ENCODE measurements at regions of chr22 and their contacts with region 1.

Region 1: GRCh38 chr22:19970479-19971275 is 29.1 kb upstream of the TXNRD2 start:
- DNase-seq: peak; percentile 83
- H3K4me3 Mint-ChIP-seq: no peak overlapping the region
- H3K27ac Mint-ChIP-seq: no peak overlapping the region
- H3K4me1 Mint-ChIP-seq: peaks cover 6% of the 10 kb centered on the region
- H3K27me3 Mint-ChIP-seq: no peaks in the 10 kb centered on the region

Region 2: GRCh38 chr22:19874307-19875060 is 96.2 kb before region 1 on chr22:
- CTCF ChIA-PET with region 1: no interaction called
- intact Hi-C with region 1: no loop called
- DNase-seq: peak; percentile 57
- H3K4me3 Mint-ChIP-seq: no peak overlapping the region
- H3K27ac Mint-ChIP-seq: no peak overlapping the region
- H3K4me1 Mint-ChIP-seq: peaks cover 11% of the 10 kb centered on the region
- H3K27me3 Mint-ChIP-seq: no peaks in the 10 kb centered on the region

Region 3: GRCh38 chr22:19932367-19933206 is 38.1 kb before region 1 on chr22:
- CTCF ChIA-PET with region 1: no interaction called
- intact Hi-C with region 1: no loop called
- DNase-seq: no peak
- H3K4me3 Mint-ChIP-seq: no peak overlapping the region
- H3K27ac Mint-ChIP-seq: peak overlapping the region; percentile 35
- H3K4me1 Mint-ChIP-seq: no peaks in the 10 kb centered on the region
- H3K27me3 Mint-ChIP-seq: no peaks in the 10 kb centered on the region

Region 4: DNA sequence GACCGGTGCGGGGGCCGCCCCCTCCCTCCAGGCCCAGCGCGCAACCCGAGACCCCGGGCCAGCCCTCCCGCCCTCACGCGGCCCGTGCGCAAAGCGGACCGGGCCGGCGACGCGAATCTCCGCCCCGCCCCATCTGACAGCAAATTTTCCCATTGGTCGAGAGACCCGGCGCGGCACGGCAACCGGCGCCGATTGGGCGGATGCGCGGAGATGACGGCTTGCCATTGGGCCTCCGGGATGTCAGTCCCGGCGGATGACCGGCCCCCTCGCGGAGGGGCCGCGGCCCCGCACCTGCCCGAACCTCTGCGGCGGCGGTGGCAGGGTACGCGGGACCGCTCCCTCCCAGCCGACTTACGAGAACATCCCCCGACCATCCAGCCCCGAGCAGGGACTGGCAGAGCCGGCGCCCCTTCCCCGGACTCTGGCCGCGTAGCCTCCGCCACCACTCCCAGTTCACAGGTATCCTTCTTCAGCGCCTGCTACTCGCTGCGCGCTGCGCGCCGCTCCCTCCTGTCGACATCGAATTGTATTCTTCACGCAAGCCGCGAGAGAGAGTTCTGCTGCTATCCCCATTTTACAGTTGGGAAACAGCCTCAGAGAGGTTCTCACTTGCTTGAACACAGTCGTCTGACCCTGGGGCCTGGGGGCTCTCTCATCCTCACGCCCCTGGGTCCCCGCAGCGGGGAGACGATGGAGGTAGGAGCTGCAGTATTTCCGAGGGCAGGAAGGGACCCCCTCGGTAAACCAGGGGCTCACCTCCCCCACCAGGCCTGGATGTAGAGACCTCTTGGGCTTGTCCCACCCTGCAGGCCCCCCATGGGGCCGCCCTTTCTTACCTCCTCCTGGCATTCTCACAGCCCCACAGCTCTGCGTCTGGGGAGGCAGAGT is 46.3 kb after region 1 on chr22 and contains the start of gene ARVCF:
- CTCF ChIA-PET with region 1: interaction called, 7 read pairs
- intact Hi-C with region 1: loop called (anchors 1 kb)
- DNase-seq: peak; percentile 90
- H3K4me3 Mint-ChIP-seq: peak within 1 kb of the TSS; percentile 84
- H3K27ac Mint-ChIP-seq: no peak within 1 kb of the TSS
- H3K4me1 Mint-ChIP-seq: peaks cover 17% of the 10 kb centered on the region
- H3K27me3 Mint-ChIP-seq: peaks cover 11% of the 10 kb centered on the region
- total RNA-seq, gene ARVCF: 2.0 to 2.6 TPM

Region 5: DNA sequence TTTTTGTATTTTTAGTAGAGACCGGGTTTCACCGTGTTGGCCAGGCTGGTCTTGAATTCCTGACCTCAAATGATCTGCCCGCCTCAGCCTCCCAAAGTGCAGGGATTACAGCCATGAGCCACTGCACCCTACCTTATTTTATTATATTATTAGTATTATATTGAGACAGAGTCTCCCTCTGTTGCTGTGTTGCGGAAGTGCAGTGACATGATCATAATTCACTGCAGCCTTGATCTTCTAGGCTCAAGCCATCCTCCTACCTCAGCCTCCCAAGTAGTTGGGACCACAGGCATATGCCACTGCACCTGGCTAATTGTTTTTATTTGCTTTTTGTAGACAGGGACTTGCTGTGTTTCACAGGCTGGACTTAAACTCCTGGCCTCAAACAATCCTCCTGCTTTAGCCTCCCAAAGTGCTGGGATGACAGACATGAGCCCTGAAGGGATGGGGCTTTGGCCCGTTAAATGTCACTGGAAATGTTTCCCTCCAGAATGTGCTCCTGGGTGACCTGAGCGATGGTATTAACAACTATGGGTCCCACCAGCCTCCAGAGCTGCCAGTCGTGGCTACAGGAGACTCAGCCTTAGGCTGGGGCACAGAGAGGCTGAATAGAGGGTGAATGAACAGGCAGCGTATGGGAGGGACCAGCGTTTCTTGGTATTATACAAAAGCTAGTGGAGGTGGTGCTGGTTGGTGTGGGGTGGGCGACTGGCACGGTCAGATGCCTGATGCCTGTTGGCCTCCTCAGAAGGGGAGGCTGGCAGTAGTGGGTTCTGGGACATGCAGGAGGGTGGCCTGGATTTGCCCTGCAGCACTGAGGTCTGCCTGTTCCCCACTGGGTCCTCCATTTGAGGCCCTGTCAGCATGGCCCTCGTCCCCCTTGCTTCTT is 57.5 kb after region 1 on chr22:
- CTCF ChIA-PET with region 1: interaction called, 4 read pairs
- intact Hi-C with region 1: loop called (anchors 1 kb)
- DNase-seq: peak; percentile 36
- H3K4me3 Mint-ChIP-seq: no peak overlapping the region
- H3K27ac Mint-ChIP-seq: no peak overlapping the region
- H3K4me1 Mint-ChIP-seq: peaks cover 11% of the 10 kb centered on the region
- H3K27me3 Mint-ChIP-seq: no peaks in the 10 kb centered on the region

Region 6: GRCh38 chr22:20130739-20131596 is 160.3 kb after region 1 on chr22:
- CTCF ChIA-PET with region 1: interaction called, 9 read pairs
- intact Hi-C with region 1: loop called (anchors 1 kb)
- DNase-seq: peak; percentile 67
- H3K4me3 Mint-ChIP-seq: peak overlapping the region; percentile 62
- H3K27ac Mint-ChIP-seq: no peak overlapping the region
- H3K4me1 Mint-ChIP-seq: peaks cover 25% of the 10 kb centered on the region
- H3K27me3 Mint-ChIP-seq: no peaks in the 10 kb centered on the region

Region 7: DNA sequence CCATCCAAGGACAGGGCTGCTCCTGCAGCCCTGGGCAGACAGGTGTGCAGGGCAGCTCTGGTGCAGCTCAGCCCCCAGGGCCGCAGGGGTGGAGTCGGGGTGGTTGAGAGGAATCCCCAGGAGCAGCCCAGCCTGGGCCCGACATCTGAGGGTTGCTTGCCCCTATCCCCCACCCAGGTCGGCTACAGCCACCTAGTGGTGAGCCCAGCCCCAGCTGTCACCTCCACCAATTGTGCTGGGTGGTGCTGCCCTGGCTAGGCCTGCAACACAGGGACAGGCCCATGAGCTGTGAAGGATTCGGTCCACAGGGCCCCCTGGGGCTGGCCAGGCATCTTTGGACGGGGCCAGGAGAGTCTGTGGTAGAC is 267.8 kb after region 1 on chr22:
- CTCF ChIA-PET with region 1: no interaction called
- intact Hi-C with region 1: loop called (anchors 1 kb)
- DNase-seq: peak; percentile 81
- H3K4me3 Mint-ChIP-seq: no peak overlapping the region
- H3K27ac Mint-ChIP-seq: peak overlapping the region; percentile 36
- H3K4me1 Mint-ChIP-seq: peaks cover 18% of the 10 kb centered on the region
- H3K27me3 Mint-ChIP-seq: no peaks in the 10 kb centered on the region

Region 8: DNA sequence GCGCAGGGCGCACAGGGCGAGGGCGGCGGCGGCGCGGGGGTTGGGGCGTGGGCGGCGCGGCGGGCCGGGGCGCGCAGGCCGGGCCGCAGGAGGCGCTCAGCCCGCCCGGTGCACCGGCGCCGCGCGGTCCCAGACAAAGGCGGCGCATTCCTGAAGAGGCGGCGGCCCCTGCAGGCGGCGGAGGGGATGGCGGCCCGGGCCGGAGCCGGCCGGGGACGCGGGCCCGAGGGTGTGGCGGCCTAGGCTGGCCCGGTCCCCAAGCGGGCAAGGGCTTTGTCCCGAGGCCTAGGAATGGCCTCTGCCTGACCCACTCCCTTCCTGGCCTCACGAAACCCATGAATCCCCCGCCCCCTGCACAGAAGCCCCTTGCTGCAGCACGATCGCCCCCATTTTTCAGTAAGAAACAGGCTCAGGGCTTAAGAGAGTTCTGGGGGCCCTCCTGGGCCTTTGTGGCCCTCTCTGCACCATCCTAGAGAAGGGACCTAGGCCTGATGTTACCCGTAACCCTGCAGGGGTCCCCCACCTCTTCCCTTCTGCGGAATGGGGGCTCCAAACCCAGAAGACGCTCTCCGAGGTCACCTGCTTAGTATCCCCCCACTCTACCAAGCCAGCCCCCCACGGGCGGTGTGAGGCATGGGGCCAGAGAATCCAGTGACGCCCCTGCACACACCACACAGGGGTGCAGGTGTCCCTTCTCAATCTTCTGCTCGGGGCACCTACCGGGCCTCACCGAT is 297.8 kb after region 1 on chr22 and contains the start of gene RTN4R:
- CTCF ChIA-PET with region 1: no interaction called
- intact Hi-C with region 1: loop called (anchors 1 kb)
- DNase-seq: peak; percentile 65
- H3K4me3 Mint-ChIP-seq: peak within 1 kb of the TSS; percentile 66
- H3K27ac Mint-ChIP-seq: no peak within 1 kb of the TSS
- H3K4me1 Mint-ChIP-seq: peaks cover 4% of the 10 kb centered on the region
- H3K27me3 Mint-ChIP-seq: no peaks in the 10 kb centered on the region
- total RNA-seq, gene RTN4R: 2.1 to 2.5 TPM

Region 9: DNA sequence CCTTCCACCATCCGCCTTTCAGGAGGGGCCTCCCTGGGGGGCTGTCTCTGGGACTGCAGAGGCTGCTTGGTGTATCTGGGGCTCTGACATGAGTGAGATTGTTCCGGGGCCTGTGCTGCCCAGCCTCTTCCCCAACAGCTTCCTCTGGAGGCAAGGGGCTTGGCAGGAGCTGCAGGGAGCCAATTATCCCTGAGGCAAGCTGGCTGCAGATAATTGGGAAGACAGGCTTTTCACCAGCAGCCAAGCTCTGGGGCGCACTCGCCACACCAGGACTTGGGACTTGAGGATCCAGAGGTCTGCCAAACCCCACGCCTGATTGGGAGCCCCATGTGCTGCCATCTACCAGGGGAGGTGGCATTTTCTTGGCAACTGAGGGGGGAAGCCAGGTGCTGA is 313.0 kb after region 1 on chr22:
- CTCF ChIA-PET with region 1: no interaction called
- intact Hi-C with region 1: loop called (anchors 2 kb)
- DNase-seq: no peak
- H3K4me3 Mint-ChIP-seq: no peak overlapping the region
- H3K27ac Mint-ChIP-seq: no peak overlapping the region
- H3K4me1 Mint-ChIP-seq: no peaks in the 10 kb centered on the region
- H3K27me3 Mint-ChIP-seq: no peaks in the 10 kb centered on the region

Measured in activated naive CD4-positive, alpha-beta T cell treated with anti-CD3 and anti-CD28 coated beads for 36 hours (primary cell).